CD4-positive, alpha-beta T cell (primary cell): ENCODE measurements at regions of chr2 and their contacts with region 1.

Region 1: DNA sequence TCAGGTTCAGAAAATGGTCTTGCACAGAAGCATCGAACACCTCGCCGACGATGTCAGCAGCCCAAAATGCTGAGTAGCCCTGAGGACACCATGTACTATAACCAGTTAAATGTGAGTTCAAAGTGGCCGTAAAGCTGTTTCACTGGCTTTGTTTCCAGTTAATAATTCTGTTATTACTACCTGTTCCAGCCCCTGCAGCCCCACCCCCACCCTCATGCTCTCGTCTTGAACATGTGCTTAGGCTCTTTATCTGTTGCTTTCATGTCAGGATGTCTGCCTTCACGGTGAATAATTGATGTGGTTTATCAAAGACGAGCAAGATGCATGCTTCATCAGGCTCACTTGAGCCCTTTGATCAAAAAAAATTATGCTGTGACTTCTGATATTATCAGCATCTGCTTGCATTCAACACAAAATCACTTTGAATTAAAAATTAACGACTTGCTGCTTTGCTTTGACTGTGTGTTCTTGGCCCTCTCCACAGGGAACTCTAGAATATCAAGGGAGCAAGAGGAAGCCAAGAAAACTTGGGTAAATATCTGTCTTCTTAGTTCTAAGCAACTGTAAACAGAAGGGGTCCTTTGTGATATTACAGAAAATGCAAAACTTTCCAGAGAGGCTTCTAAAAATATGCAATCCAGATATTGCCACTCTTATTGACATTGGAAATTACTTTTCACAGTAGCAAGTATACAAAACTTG is 63.4 kb upstream of the SP5 start:
- DNase-seq: peak; percentile 9 to 90 (median 40)
- ATAC-seq: peak; percentile 99
- H3K4me3 ChIP-seq: no peak overlapping the region
- H3K4me3 Mint-ChIP-seq: peak overlapping the region; percentile 1
- H3K27ac ChIP-seq: no peak overlapping the region
- H3K27ac Mint-ChIP-seq: no peak overlapping the region
- H3K4me1 ChIP-seq: peaks cover 13% of the 10 kb centered on the region
- H3K4me1 Mint-ChIP-seq: peaks cover 39% of the 10 kb centered on the region
- H3K27me3 ChIP-seq: no peaks in the 10 kb centered on the region
- H3K27me3 Mint-ChIP-seq: peaks cover 7% of the 10 kb centered on the region
- CTCF ChIP-seq: no peak

Region 2: DNA sequence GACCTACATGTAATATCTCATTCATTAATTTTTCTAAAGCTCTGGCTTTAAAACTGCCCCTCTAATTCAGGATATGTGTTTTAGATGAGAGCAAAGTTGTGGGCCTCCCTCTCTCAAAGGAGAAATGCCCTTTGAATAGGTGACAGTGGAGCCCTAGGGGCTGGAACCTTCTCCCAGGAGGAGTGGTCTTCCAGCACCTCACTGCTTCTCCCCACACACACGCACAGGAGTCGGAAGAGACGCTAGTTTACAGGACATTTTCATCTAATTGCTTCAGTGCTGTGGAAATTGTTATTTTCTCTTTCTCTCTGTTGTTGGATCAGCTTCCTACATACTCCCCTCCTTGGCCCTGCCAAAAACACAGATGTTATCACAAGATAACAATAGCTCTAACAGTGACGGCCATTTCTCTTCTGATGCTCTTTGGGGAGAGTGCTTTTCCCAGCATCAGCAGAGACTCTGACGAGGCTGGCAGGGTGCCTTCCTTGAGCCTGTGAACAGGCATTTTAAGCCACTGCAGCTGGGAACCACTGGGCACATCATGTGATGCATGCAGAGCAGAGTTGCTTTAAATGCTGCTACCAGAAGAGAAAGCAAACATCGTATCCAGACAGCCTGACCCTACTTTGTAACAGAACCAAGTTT is 146.0 kb before region 1 on chr2:
- CTCF ChIA-PET with region 1: no interaction called
- POLR2A ChIA-PET with region 1: no interaction called
- intact Hi-C with region 1: loop called in 1 of 2 experiments (anchors 1 kb)
- DNase-seq: peak in 1 of 14 experiments; percentile 4
- ATAC-seq: no peak
- H3K4me3 ChIP-seq: no peak overlapping the region
- H3K4me3 Mint-ChIP-seq: no peak overlapping the region
- H3K27ac ChIP-seq: no peak overlapping the region
- H3K27ac Mint-ChIP-seq: no peak overlapping the region
- H3K4me1 ChIP-seq: peaks cover 18% of the 10 kb centered on the region
- H3K4me1 Mint-ChIP-seq: peaks cover 40% of the 10 kb centered on the region
- H3K27me3 ChIP-seq: no peaks in the 10 kb centered on the region
- H3K27me3 Mint-ChIP-seq: peaks cover 19% of the 10 kb centered on the region
- CTCF ChIP-seq: no peak

Region 3: DNA sequence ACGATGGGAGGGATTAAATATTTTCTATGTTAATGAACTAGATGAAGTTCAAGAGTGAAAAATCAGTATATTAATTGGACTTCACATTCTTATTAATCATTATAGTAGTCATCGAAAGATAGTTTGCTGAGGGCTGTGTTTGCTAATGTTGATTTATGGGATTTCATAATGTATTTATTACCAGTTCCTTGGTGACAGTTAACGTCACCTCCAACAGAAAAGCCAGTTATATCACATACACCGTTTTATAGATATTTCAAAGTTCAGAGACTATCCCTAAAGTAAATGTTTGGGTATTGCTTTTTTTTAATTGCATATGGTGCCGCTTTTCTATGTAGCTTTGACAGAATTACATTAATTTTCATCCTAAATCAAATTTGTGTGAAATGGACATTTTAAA is 14.0 kb after region 1 on chr2:
- CTCF ChIA-PET with region 1: no interaction called
- POLR2A ChIA-PET with region 1: no interaction called
- intact Hi-C with region 1: no loop called
- DNase-seq: no peak
- ATAC-seq: no peak
- H3K4me3 ChIP-seq: no peak overlapping the region
- H3K4me3 Mint-ChIP-seq: no peak overlapping the region
- H3K27ac ChIP-seq: no peak overlapping the region
- H3K27ac Mint-ChIP-seq: no peak overlapping the region
- H3K4me1 ChIP-seq: no peaks in the 10 kb centered on the region
- H3K4me1 Mint-ChIP-seq: no peaks in the 10 kb centered on the region
- H3K27me3 ChIP-seq: no peaks in the 10 kb centered on the region
- H3K27me3 Mint-ChIP-seq: peaks cover 25% of the 10 kb centered on the region
- CTCF ChIP-seq: no peak

Region 4: GRCh38 chr2:170715062-170715931 is 63.5 kb after region 1 on chr2 and contains the start of gene SP5:
- CTCF ChIA-PET with region 1: no interaction called
- POLR2A ChIA-PET with region 1: no interaction called
- intact Hi-C with region 1: loop called in 1 of 2 experiments (anchors 2 kb)
- DNase-seq: peak in 6 of 14 experiments; percentile 18 to 68 (median 52)
- ATAC-seq: peak; percentile 54
- H3K4me3 ChIP-seq: peak within 1 kb of the TSS; percentile 59
- H3K4me3 Mint-ChIP-seq: peak within 1 kb of the TSS; percentile 83
- H3K27ac ChIP-seq: no peak within 1 kb of the TSS
- H3K27ac Mint-ChIP-seq: no peak within 1 kb of the TSS
- H3K4me1 ChIP-seq: peaks cover 65% of the 10 kb centered on the region
- H3K4me1 Mint-ChIP-seq: peaks cover 51% of the 10 kb centered on the region
- H3K27me3 ChIP-seq: peaks cover 62 to 92% of the 10 kb centered on the region in 2 experiments
- H3K27me3 Mint-ChIP-seq: peaks cover 79% of the 10 kb centered on the region
- CTCF ChIP-seq: no peak
- total RNA-seq, gene SP5: not detected

Region 5: GRCh38 chr2:170770606-170771420 is 119.0 kb after region 1 on chr2:
- CTCF ChIA-PET with region 1: no interaction called
- POLR2A ChIA-PET with region 1: no interaction called
- intact Hi-C with region 1: loop called in 1 of 2 experiments (anchors 10 kb)
- DNase-seq: peak; percentile 14 to 85 (median 50)
- ATAC-seq: peak; percentile 80
- H3K4me3 ChIP-seq: peak overlapping the region; percentile 76
- H3K4me3 Mint-ChIP-seq: peak overlapping the region; percentile 88
- H3K27ac ChIP-seq: no peak overlapping the region
- H3K27ac Mint-ChIP-seq: no peak overlapping the region
- H3K4me1 ChIP-seq: peaks cover 14% of the 10 kb centered on the region
- H3K4me1 Mint-ChIP-seq: peaks cover 33% of the 10 kb centered on the region
- H3K27me3 ChIP-seq: no peaks in the 10 kb centered on the region
- H3K27me3 Mint-ChIP-seq: peaks cover 5% of the 10 kb centered on the region
- CTCF ChIP-seq: no peak